IMR-90 (cell line): ENCODE measurements at regions of chr12 and their contacts with region 1.

Region 1: DNA sequence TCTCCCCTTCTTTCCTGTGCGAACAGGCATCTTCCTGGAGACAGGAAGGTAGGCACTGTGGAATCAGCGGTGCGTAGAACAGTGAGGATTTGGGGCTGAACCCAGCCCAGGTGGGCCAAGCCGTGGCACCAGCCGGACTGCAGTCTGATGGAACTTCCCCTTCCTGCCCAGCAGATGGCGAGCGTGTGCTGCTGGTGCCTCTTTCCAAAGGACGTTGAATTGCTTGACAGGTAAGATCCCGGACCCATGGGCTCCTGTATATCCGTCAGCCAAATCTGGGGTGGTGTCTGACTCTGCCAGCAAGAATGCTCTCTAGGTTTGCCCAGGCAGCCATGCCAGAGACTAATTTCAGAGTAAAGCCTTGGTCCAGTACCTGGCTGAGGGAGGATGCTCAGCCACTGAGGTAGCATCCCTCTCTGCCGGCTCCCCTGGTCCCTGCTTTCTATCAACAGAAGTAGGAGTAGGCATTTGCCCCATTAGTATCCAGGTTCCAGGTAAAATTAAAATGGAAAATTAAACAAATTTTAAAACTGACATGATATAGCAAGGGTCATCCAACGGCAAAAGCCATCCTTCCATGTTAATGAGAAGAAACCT is 21.1 kb upstream of the KCNA5 start:
- DNase-seq: peak; percentile 36
- ATAC-seq: peak; percentile 80
- H3K4me3 ChIP-seq: no peak overlapping the region
- H3K27ac ChIP-seq: no peak overlapping the region
- H3K4me1 ChIP-seq: no peaks in the 10 kb centered on the region
- H3K27me3 ChIP-seq: peaks cover 32% of the 10 kb centered on the region
- CTCF ChIP-seq: peak; percentile 74
- POLR2A ChIP-seq: no peak
- RAD21 ChIP-seq: peak; percentile 84

Region 2: GRCh38 chr12:4449851-4450221 is 572.7 kb before region 1 on chr12:
- CTCF ChIA-PET with region 1: no interaction called
- POLR2A ChIA-PET with region 1: no interaction called
- dilution Hi-C with region 1: no loop called
- in situ Hi-C with region 1: no loop called
- intact Hi-C with region 1: no loop called
- DNase-seq: no peak
- ATAC-seq: no peak
- H3K4me3 ChIP-seq: no peak overlapping the region
- H3K27ac ChIP-seq: no peak overlapping the region
- H3K4me1 ChIP-seq: no peaks in the 10 kb centered on the region
- H3K27me3 ChIP-seq: peaks cover 25% of the 10 kb centered on the region
- CTCF ChIP-seq: no peak
- POLR2A ChIP-seq: no peak
- RAD21 ChIP-seq: no peak

Region 3: GRCh38 chr12:5083955-5084849 is 61.6 kb after region 1 on chr12:
- CTCF ChIA-PET with region 1: interaction called, 5 read pairs
- POLR2A ChIA-PET with region 1: interaction called, 3 read pairs
- dilution Hi-C with region 1: no loop called
- in situ Hi-C with region 1: loop called (anchors 5 kb)
- intact Hi-C with region 1: loop called (anchors 1 kb)
- DNase-seq: peak; percentile 71
- ATAC-seq: peak; percentile 44
- H3K4me3 ChIP-seq: no peak overlapping the region
- H3K27ac ChIP-seq: no peak overlapping the region
- H3K4me1 ChIP-seq: peaks cover 20% of the 10 kb centered on the region
- H3K27me3 ChIP-seq: peaks cover 3% of the 10 kb centered on the region; the same call in 1 of the 2 replicates
- CTCF ChIP-seq: peak; percentile 79
- POLR2A ChIP-seq: no peak
- RAD21 ChIP-seq: peak; percentile 78

Region 4: DNA sequence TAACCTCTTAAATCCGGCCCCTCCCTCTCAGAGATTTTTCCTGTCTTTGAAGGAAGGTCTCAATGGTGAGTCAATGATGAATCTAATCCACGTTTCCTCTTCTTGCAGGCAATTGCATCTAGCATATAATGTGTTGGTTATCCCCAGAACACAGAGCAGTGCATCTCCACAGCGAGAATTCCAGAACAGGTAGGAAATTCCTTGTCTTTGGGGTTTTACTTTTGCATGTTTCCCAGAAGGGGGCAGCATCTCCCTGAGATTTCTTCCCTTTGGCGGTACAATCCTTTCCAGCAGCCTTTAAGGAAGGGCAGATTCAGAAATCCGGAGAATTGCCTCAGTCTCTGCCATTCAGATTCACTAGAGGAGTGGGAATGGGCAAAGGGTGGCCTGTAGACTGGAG is 149.1 kb after region 1 on chr12:
- CTCF ChIA-PET with region 1: no interaction called
- POLR2A ChIA-PET with region 1: no interaction called
- dilution Hi-C with region 1: no loop called
- in situ Hi-C with region 1: no loop called
- intact Hi-C with region 1: loop called (anchors 5 kb)
- DNase-seq: peak; percentile 77
- ATAC-seq: peak; percentile 34
- H3K4me3 ChIP-seq: no peak overlapping the region
- H3K27ac ChIP-seq: no peak overlapping the region
- H3K4me1 ChIP-seq: peaks cover 23% of the 10 kb centered on the region
- H3K27me3 ChIP-seq: no peaks in the 10 kb centered on the region
- CTCF ChIP-seq: peak; percentile 82
- POLR2A ChIP-seq: no peak
- RAD21 ChIP-seq: peak; percentile 87

Region 5: DNA sequence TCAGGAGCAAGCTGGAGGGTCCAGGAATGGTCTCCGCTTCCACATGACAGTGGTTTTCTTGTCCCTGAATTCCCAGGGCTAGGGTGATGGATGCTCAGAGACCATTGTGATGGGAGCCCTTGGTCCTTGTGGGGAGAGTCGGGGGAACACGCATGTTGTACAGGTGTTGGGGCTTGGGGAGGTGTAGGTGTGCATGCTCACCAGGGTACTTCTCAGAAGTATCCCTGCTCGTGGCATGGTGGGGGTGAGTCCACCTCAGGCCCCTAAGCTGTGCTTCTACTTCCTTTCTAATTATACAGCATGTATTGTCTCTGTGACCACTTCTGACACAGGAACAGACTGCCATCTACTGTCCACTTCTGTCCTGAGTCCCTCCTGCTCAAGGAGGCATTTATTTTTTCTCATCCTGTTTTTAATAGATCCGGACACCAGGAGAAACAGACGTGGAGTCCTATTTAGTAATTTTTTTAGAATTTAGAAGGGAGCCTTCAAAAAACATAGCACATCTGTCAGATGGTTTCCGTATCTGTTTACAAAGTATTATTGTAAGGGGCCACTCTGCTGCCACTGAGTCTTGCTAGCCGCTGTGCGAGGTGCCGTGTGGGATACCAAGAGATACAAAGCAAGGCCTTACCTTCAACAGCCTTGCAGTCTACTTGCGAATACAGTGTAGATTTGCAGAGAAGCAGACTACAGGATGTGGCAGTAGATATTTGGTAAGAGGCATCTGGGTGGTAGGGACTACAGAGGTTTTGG is 419.9 kb after region 1 on chr12:
- CTCF ChIA-PET with region 1: no interaction called
- POLR2A ChIA-PET with region 1: no interaction called
- dilution Hi-C with region 1: no loop called
- in situ Hi-C with region 1: no loop called
- intact Hi-C with region 1: loop called (anchors 1 kb)
- DNase-seq: peak; percentile 73
- ATAC-seq: peak; percentile 78
- H3K4me3 ChIP-seq: no peak overlapping the region
- H3K27ac ChIP-seq: peak overlapping the region; percentile 30; the same call in 1 of the 2 replicates
- H3K4me1 ChIP-seq: peaks cover 30% of the 10 kb centered on the region
- H3K27me3 ChIP-seq: no peaks in the 10 kb centered on the region
- CTCF ChIP-seq: peak; percentile 77
- POLR2A ChIP-seq: no peak
- RAD21 ChIP-seq: peak; percentile 81

Region 6: GRCh38 chr12:5511644-5512600 is 489.4 kb after region 1 on chr12:
- CTCF ChIA-PET with region 1: no interaction called
- POLR2A ChIA-PET with region 1: no interaction called
- dilution Hi-C with region 1: no loop called
- in situ Hi-C with region 1: no loop called
- intact Hi-C with region 1: loop called (anchors 1 kb)
- DNase-seq: peak; percentile 44
- ATAC-seq: peak; percentile 79
- H3K4me3 ChIP-seq: no peak overlapping the region
- H3K27ac ChIP-seq: no peak overlapping the region
- H3K4me1 ChIP-seq: peaks cover 5% of the 10 kb centered on the region
- H3K27me3 ChIP-seq: no peaks in the 10 kb centered on the region
- CTCF ChIP-seq: peak; percentile 72
- POLR2A ChIP-seq: no peak
- RAD21 ChIP-seq: peak; percentile 79

Region 7: GRCh38 chr12:5796171-5796958 is 773.8 kb after region 1 on chr12:
- CTCF ChIA-PET with region 1: no interaction called
- POLR2A ChIA-PET with region 1: no interaction called
- dilution Hi-C with region 1: no loop called
- in situ Hi-C with region 1: loop called (anchors 10 kb)
- intact Hi-C with region 1: loop called (anchors 10 kb)
- DNase-seq: peak; percentile 30
- ATAC-seq: peak; percentile 86
- H3K4me3 ChIP-seq: no peak overlapping the region
- H3K27ac ChIP-seq: no peak overlapping the region
- H3K4me1 ChIP-seq: no peaks in the 10 kb centered on the region
- H3K27me3 ChIP-seq: peaks cover 35% of the 10 kb centered on the region
- CTCF ChIP-seq: peak; percentile 72
- POLR2A ChIP-seq: no peak
- RAD21 ChIP-seq: peak; percentile 91